Dorsolateral prefrontal cortex (tissue), 120 donors: ENCODE measurements at regions of chr6 and their contacts with region 1.

Region 1: DNA sequence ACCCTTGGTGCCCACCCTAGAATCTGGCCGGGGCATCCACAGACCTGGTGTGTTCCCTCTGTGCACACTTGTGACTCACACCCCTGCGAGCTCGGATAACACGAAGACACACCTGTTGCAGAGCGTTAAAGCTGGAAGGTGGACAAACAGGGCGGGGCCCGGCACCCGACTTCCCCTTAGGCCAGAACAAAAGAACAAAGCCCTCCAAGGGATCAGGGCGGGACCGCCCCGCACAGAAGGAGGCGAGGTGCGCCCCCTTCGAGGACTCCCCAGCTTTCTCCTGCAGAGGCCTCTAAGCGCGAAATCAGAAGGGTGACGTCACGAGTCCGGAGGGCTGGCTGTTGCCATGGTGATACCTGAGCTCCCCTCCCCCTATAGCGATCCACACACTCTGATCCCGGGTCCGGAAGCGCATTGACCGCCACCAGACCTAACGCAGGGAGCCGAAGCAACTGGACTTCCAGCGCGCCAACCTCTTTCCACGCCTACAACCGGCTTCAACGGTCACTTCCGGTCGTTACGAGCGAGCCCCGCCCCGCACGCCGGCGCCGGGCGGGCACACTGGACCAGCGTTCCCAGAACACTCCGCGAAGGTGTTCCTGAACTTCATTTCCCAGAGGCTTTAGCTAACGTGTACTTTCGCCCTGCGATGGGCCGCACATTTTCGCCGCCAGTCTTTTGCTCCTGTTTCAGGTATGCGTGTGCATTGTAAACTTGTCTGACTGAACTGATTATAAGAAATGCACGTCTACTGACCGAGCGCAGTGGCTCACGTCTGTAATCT is at the start of gene ZNF184:
- DNase-seq: peak; percentile 82 to 96 (median 94)
- H3K4me3 ChIP-seq: peak within 1 kb of the TSS; percentile 63 to 99 (median 86)
- H3K27ac ChIP-seq: peak within 1 kb of the TSS; percentile 29 to 94 (median 83)
- H3K27me3 ChIP-seq: no peaks in the 10 kb centered on the region
- CTCF ChIP-seq: peak in 37 of 56 donors; percentile 2 to 57 (median 25)
- total RNA-seq, gene ZNF184: 11.0 to 38.3 (median 22.4) TPM

Region 2: DNA sequence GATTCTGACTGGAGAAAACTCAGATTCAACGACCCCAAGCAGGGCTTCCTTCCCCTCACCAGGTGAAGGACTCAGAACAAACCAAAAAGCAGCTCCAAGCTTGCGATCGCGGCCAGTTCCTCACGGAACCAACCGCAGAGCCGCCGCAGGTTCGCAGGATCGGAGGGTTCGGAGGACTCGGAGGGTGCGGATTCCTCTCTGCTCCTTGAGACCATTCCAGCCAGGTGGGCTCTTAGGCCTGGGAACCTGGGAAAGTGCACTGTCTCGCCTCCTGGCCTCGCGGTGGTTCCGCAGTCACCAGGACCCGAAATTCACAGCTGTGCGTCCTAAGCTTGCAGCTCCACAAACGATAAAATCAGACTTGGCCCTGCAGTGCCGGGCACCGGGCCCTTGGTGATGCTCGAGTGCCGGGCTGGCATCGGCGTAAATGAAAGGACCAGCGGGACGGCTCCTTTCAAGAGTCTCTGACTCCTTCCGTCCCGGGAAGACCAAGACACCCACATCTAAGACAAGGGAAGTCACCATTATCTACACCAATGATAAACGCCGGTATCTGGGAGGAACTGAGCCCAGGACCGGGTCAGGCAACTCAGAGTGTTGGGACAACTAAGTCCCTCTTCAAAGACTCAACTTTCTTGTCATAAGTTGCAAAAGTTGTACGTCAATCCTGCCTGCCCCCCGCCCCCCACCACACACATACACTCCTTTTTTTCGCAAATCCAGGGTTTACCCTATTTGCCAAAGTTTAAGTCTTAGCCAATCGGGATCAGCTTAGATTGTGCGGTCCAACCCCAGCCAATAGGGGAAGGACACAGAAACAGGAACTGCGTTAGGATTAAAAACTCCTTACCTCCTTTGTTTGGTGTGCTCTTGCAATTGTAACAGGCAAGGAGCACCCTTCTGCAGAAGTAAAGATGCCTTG is 295.1 kb before region 1 on chr6:
- intact Hi-C with region 1: loop called (anchors 10 kb)
- DNase-seq: peak; percentile 63 to 89 (median 83)
- H3K4me3 ChIP-seq: peak overlapping the region; percentile 55 to 100 (median 95)
- H3K27ac ChIP-seq: peak overlapping the region in 53 of 59 donors; percentile 28 to 91 (median 78)
- H3K27me3 ChIP-seq: peaks cover 0 to 18% (median 0%) of the 10 kb centered on the region in 45 donors
- CTCF ChIP-seq: peak in 42 of 56 donors; percentile 4 to 55 (median 35)

Region 3: DNA sequence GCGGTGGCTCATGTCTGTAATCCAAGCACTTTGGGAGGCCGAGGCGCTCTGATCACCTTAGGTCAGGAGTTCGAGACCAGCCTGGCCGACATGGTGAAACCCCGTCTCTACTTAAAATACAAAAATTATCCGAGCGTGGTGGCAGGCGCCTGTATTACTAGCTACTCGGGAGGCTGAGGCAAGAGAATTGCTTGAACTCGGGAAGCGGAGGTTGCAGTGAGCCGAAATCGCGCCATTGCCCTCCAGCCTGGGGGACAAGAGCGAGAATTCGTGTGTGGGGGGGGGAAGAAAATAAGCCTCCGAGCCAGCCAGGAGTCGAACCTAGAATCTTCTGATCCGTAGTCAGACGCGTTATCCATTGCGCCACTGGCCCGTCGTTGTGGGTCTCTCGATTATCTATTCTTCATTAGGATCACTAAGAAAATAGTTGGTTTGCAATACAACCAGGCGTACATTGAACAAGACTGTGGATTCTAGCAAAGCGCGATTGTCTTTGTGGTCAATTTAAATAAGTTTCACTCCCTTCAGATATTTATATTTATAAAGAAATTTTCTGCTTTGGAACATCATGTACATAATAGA is 259.2 kb before region 1 on chr6:
- intact Hi-C with region 1: no loop called
- DNase-seq: no peak
- H3K4me3 ChIP-seq: peak overlapping the region in 3 of 59 donors; percentile 15 to 18 (median 17)
- H3K27ac ChIP-seq: no peak overlapping the region
- H3K27me3 ChIP-seq: peaks cover 0 to 98% (median 55%) of the 10 kb centered on the region in 45 donors
- CTCF ChIP-seq: no peak

Region 4: GRCh38 chr6:27321901-27322300 is 150.9 kb before region 1 on chr6:
- intact Hi-C with region 1: no loop called
- DNase-seq: no peak
- H3K4me3 ChIP-seq: no peak overlapping the region
- H3K27ac ChIP-seq: no peak overlapping the region
- H3K27me3 ChIP-seq: peaks cover 0 to 23% (median 0%) of the 10 kb centered on the region in 45 donors
- CTCF ChIP-seq: no peak

Region 5: GRCh38 chr6:27374824-27375612 is 97.8 kb before region 1 on chr6:
- intact Hi-C with region 1: loop called in 1 of 2 experiments (anchors 5 kb)
- DNase-seq: peak; percentile 46 to 88 (median 81)
- H3K4me3 ChIP-seq: peak overlapping the region; percentile 52 to 94 (median 80)
- H3K27ac ChIP-seq: peak overlapping the region in 20 of 59 donors; percentile 5 to 77 (median 38)
- H3K27me3 ChIP-seq: no peaks in the 10 kb centered on the region
- CTCF ChIP-seq: no peak

Region 6: DNA sequence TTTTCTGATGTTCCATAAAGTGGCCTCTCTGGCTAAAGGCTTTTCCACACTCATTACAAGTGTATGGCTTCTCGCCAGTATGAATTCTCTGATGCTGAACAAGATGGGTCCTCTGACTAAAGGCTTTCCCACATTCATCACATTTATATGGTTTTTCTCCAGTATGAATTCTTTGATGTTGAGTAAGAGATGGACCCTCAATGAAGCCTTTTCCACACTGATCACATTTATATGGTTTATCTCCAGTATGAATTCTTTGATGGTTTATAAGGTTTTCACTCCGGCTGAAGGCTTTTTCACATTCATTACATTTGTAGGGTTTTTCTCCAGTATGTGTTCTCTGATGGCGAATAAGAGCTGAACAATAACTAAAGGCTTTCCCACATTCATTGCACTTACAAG is 20.3 kb before region 1 on chr6:
- intact Hi-C with region 1: no loop called
- DNase-seq: no peak
- H3K4me3 ChIP-seq: no peak overlapping the region
- H3K27ac ChIP-seq: no peak overlapping the region
- H3K27me3 ChIP-seq: no peaks in the 10 kb centered on the region
- CTCF ChIP-seq: no peak

Region 7: DNA sequence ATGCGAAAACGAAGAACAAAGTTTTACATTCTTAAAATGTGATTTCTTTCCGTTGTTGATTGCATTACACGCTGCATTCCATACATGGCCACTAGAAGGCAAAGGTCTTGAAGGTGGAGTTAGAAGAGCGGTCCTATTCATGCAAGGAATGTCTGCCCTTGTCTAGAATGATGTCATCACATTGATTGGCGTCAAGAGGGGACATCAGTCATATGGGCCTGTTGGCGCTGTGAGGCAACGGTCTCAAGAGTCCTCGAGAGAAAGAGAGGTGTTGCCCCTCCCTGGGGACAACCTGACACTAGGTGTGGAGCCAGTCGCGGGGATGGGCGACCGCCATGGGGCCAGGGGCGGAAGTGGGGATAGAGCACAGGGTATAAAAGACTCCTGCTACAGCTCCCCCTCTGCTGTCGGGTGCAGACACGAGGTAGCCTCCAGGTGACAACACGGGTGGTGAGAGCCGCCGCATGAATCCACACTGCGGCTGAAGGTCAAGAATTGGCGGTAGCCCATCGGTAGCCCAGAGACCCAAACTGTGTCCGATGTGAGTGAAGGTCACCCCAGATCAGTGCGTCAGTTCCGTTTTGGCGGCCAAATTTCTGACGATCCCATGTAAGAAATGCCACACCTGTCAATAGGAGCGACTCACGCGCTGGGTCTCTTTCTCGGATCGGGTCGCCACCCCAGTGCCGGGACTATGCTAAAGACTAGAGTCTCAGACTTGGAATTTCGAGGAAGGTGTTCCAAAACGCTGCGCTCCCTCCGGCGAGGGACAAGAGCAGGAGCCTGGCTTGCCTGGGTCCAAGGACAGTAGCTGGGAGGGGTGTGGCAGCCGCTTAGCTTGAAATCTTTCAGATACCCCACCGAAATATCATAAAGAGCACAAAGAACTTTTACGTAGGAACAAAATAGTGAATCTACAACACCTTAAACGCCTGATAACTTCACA is 93.3 kb after region 1 on chr6:
- intact Hi-C with region 1: no loop called
- DNase-seq: no peak
- H3K4me3 ChIP-seq: no peak overlapping the region
- H3K27ac ChIP-seq: no peak overlapping the region
- H3K27me3 ChIP-seq: peaks cover 3 to 84% (median 73%) of the 10 kb centered on the region in 45 donors
- CTCF ChIP-seq: no peak

Region 8: DNA sequence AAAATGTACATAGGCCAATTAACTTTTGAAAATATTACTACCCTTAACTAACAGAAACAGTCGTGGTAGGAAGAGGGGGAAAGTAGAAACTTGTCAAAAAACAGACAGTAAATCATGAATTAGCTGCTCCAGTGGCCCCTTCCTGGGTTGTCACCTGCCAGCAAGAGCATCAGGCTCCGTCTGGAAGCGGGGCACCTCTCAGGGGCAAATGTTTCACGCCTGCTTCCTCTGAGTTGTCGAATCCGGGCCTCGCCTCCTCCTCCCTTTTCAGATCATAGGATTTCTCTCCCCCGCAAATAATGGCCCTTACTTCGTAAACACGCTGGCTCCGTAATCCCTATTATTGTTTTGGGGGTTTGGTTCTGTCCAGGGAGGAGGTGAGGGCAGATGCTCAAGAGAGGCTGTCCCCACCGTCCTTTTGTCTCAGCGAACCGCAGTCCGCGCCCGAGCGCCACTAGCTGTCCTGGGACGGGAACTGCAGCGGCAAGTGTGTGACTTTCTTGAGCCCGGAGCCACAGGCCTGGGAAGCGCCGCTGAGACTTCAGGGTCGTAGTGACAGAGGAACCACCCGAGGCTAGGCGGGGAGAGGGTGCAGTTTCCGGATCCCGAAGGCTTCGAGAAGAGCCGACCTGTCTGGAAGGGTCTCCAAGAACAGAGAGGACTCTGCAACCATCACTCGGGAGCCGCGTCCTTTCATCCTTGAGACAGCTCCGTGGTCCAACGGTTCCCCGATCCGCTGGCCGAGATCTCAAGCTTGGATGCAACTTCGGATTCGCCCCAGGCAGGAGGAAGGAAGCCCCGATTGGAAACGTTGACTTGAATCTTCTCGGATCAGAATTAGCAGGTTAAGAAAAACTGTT is 214.6 kb after region 1 on chr6:
- intact Hi-C with region 1: loop called in 1 of 2 experiments (anchors 10 kb)
- DNase-seq: peak; percentile 60 to 90 (median 82)
- H3K4me3 ChIP-seq: peak overlapping the region; percentile 39 to 81 (median 62)
- H3K27ac ChIP-seq: peak overlapping the region in 50 of 59 donors; percentile 9 to 85 (median 64)
- H3K27me3 ChIP-seq: peaks cover 0 to 11% (median 4%) of the 10 kb centered on the region in 45 donors
- CTCF ChIP-seq: peak in 53 of 56 donors; percentile 25 to 68 (median 49)

Region 9: GRCh38 chr6:27902335-27903314 is 429.8 kb after region 1 on chr6:
- intact Hi-C with region 1: loop called in 1 of 2 experiments (anchors 2 kb)
- DNase-seq: peak; percentile 74 to 92 (median 84)
- H3K4me3 ChIP-seq: peak overlapping the region; percentile 51 to 86 (median 71)
- H3K27ac ChIP-seq: peak overlapping the region; percentile 58 to 98 (median 91)
- H3K27me3 ChIP-seq: no peaks in the 10 kb centered on the region
- CTCF ChIP-seq: peak in 19 of 56 donors; percentile 6 to 39 (median 15)